Prostate gland (tissue), 2 donors: ENCODE measurements at regions of chr6 and their contacts with region 1.

Region 1: DNA sequence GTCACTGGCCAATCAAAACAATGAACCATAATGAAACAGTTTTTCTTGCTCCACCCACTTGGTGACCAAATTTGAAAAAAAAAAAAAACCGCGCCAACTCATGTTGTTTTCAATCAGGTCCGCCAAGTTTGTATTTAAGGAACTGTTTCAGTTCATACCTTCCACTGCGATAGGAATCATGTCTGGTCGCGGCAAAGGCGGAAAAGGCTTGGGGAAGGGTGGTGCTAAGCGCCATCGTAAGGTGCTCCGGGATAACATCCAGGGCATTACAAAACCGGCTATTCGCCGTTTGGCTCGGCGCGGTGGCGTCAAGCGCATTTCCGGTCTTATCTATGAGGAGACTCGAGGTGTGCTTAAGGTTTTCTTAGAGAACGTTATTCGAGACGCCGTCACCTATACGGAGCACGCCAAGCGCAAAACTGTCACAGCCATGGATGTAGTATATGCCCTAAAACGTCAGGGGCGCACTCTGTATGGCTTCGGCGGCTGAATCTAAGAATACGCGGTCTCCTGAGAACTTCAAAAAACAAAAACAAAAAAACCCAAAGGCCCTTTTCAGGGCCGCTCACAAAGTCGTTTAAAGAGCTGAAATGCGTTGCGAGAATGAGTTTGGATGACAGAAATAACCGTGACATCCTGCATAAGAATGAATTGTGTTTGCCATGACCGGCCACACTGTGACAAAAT is 16.7 kb downstream of the HFE start:
- DNase-seq: peak; percentile 95
- H3K4me3 ChIP-seq: peak overlapping the region; percentile 29 to 44
- H3K27ac ChIP-seq: peak overlapping the region; percentile 78 to 86
- H3K4me1 ChIP-seq: no peaks in the 10 kb centered on the region
- H3K27me3 ChIP-seq: no peaks in the 10 kb centered on the region
- CTCF ChIP-seq: peak in 2 of 4 experiments; percentile 41 to 49
- POLR2A ChIP-seq: peak; percentile 92

Region 2: DNA sequence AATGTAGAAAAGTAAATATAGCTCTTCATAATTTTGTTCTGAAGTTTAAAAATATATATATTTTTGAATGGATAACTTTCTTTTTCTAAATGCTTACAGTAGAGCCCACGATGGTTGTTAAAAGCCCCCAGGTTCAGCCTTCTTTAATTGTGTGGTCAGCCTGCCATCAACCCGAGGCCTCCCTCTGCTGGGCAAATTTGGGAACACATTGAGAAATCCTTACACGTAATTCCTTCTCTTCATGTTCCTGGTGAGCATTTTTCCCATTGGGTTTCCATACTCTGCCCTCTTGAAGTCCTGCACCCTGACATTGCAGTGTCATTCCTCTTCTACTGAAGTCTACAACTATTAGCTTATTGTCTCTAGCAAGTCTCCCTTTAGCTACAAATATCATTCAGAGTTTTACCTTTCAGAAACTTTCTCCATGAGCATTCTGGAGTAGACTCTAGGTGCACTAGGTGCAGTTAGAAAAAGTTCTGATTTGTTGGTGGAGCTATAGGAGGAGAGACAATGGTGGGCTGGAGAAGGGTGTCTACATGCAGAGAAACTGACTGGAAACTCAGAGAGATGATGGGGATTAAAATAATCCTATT is 100.7 kb before region 1 on chr6:
- intact Hi-C with region 1: no loop called
- DNase-seq: peak; percentile 52
- H3K4me3 ChIP-seq: no peak overlapping the region
- H3K27ac ChIP-seq: no peak overlapping the region
- H3K4me1 ChIP-seq: no peaks in the 10 kb centered on the region
- H3K27me3 ChIP-seq: no peaks in the 10 kb centered on the region
- CTCF ChIP-seq: peak; percentile 19 to 67 (median 54)
- POLR2A ChIP-seq: no peak

Region 3: DNA sequence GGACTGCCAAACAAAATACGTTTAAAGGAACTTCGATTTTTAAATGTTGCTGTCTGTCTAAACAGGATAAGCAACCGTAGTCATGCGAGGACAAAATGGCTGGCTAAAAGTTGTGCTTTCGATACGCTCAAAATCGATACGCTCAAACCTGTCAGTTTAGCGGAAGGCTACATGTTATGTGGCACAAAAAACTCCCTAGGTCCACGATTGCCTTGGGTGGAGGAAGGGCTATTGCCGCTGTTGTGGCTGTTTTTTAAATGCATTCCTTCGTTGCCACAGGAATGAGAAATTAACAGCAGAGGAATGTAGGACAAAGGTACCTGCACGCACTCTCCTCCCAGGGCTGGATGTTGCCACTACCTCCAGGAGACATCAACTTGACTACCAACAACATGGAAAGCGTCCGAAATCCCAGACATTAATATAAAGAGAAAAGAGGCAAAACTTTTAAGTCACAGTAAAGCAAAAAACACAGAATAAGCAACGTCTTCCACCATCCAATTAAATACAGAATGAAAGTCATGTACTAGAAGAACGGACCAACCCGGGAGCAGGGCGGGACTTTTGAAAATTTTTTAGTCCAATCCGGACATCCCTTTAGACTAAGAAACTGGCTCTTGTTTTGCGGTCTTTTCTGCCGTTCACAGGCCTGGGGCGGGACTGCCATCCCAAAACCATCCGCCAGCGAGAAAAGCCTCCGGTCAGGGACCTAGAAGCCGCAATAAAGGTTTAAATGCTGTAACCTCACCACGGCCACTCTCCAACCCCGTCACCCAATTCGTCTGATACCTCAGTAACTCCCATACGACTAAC is 48.9 kb before region 1 on chr6:
- intact Hi-C with region 1: loop called (anchors 2 kb)
- DNase-seq: peak; percentile 92
- H3K4me3 ChIP-seq: peak overlapping the region; percentile 48 to 75
- H3K27ac ChIP-seq: peak overlapping the region; percentile 91 to 94
- H3K4me1 ChIP-seq: no peaks in the 10 kb centered on the region
- H3K27me3 ChIP-seq: no peaks in the 10 kb centered on the region
- CTCF ChIP-seq: peak in 2 of 4 experiments; percentile 34 to 59
- POLR2A ChIP-seq: peak; percentile 63

Region 4: DNA sequence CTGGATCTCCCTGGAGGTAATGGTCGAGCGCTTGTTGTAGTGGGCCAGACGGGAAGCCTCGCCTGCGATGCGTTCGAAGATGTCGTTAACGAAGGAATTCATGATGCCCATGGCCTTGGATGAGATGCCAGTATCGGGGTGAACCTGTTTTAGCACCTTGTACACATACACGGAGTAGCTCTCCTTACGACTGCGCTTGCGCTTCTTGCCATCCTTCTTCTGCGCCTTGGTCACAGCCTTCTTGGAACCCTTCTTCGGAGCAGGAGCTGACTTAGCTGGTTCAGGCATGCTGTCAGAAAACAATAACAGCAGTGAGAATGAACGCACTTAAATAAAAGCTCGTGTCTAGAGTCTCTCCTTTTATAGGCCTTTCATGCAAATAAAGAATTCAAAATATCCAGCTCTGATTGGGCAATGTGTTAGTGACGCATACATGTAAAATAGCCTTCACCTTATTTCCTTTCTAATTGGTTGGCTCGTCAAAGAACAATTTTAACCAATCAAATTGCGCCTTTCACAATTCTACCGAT is 112.5 kb after region 1 on chr6:
- intact Hi-C with region 1: loop called (anchors 5 kb)
- DNase-seq: peak; percentile 94
- H3K4me3 ChIP-seq: peak overlapping the region; percentile 45 to 54
- H3K27ac ChIP-seq: peak overlapping the region; percentile 92
- H3K4me1 ChIP-seq: peaks cover 3% of the 10 kb centered on the region
- H3K27me3 ChIP-seq: no peaks in the 10 kb centered on the region
- CTCF ChIP-seq: no peak
- POLR2A ChIP-seq: peak; percentile 94